Lower leg skin (tissue), 4 donors: ENCODE measurements at regions of chr1 and their contacts with region 1.

Region 1: GRCh38 chr1:67230539-67230938 is 64.3 kb downstream of the IL23R start:
- DNase-seq: no peak
- H3K4me3 ChIP-seq: no peak overlapping the region
- CTCF ChIP-seq: no peak
- POLR2A ChIP-seq: no peak

Region 2: DNA sequence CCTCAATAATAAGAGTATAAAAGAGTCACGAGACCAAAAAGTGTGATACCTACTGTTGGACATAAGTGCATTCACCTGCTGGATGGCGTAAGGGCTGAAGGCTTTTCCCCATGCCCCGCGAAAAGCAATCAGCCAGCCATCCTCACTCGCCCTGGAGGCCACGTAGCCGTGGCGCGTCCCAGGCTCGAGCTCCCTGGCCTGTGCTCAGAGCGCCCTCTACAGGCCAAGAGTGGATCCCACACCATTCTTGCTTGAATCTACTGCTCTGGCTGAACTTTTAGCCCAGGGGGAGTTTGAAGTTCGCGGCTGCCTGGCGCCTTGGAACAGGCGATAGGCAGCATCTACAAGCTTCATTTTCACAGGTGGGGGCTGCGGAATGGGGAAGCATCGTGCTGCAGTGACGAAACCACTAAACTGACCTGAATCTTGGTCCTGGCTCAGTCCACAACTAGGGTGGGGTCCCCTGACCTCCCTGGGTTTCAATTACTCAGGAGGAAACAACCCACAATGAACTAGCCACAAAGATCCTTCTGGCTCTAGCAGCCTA is 269.9 kb after region 1 on chr1:
- intact Hi-C with region 1: loop called (anchors 5 kb)
- DNase-seq: peak; percentile 82 to 97
- H3K4me3 ChIP-seq: no peak overlapping the region
- CTCF ChIP-seq: peak in 1 of 3 donors; percentile 89
- POLR2A ChIP-seq: no peak